Activated naive CD4-positive, alpha-beta T cell treated with anti-CD3 and anti-CD28 coated beads, Interleukin-2, amount 10 ng/mL, durations not matched to agents 7 days and 5 days (primary cell): ENCODE measurements at regions of chr3 and their contacts with region 1.

Region 1: GRCh38 chr3:58630076-58630709 is 36.4 kb downstream of the FAM3D start:
- DNase-seq: peak; percentile 72
- H3K4me3 Mint-ChIP-seq: no peak overlapping the region
- H3K27ac Mint-ChIP-seq: no peak overlapping the region
- H3K4me1 Mint-ChIP-seq: peaks cover 2% of the 10 kb centered on the region
- H3K27me3 Mint-ChIP-seq: peaks cover 14% of the 10 kb centered on the region

Region 2: DNA sequence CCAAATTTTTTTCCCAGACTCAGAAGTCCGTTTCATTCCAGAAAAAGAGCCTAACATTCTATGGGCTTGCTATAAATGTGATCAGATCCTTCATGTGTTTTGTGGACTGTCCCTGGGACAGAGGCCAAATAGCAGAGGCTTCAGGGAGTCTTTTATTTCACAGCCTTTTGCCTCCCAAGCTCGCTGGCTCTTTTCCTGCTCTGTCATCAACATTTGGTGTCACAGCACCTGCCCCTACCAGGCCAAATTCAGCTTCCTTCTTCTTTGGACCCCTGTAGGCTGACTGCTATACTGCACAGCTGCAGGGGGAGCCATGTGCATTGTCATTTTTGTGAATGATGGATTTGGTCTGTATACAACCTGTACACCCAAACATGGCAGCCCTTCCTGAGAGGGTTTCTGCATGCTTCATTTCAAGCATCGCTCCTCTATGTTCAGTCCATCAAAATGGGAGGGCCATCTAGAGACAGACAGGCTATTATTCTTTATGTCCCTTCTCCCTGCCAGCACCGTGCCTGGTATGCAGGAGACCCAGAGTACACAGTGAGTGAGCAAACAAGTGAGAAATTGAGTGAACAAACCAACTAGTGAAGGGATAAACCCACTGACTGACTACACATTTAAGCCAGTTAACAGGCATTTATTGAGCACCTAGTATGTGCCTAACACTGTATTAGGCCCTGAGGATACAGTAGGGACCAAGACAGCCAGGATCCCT is 342.0 kb before region 1 on chr3:
- CTCF ChIA-PET with region 1: no interaction called
- DNase-seq: peak; percentile 19
- H3K4me3 Mint-ChIP-seq: no peak overlapping the region
- H3K27ac Mint-ChIP-seq: no peak overlapping the region
- H3K4me1 Mint-ChIP-seq: no peaks in the 10 kb centered on the region
- H3K27me3 Mint-ChIP-seq: no peaks in the 10 kb centered on the region

Region 3: GRCh38 chr3:58568572-58569286 is 61.5 kb before region 1 on chr3:
- CTCF ChIA-PET with region 1: interaction called, 127 read pairs
- DNase-seq: peak; percentile 81
- H3K4me3 Mint-ChIP-seq: no peak overlapping the region
- H3K27ac Mint-ChIP-seq: no peak overlapping the region
- H3K4me1 Mint-ChIP-seq: no peaks in the 10 kb centered on the region
- H3K27me3 Mint-ChIP-seq: peaks cover 12% of the 10 kb centered on the region

Region 4: DNA sequence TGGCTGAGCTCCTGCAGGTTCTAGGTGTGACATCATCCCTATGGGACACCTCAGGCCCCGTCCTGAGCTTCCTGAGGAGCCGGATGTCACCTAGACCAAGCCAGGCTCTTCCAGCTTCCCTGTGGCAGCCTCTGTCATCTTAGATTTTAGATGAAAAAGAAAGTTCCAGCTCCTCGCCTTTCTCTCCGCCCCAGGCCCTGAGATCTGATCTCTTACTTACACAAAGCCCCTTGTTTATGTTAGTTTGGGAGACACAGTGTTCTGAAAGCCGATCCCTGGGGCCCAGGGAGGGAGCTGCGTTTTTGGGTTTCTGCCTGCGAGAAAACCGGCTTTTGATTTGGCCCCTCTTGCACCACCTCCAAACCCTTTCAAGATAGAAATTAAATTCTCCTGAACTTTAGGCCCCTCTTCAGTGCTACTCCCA is 12.8 kb before region 1 on chr3:
- CTCF ChIA-PET with region 1: interaction called, 43 read pairs
- DNase-seq: no peak
- H3K4me3 Mint-ChIP-seq: no peak overlapping the region
- H3K27ac Mint-ChIP-seq: no peak overlapping the region
- H3K4me1 Mint-ChIP-seq: no peaks in the 10 kb centered on the region
- H3K27me3 Mint-ChIP-seq: peaks cover 20% of the 10 kb centered on the region

Region 5: DNA sequence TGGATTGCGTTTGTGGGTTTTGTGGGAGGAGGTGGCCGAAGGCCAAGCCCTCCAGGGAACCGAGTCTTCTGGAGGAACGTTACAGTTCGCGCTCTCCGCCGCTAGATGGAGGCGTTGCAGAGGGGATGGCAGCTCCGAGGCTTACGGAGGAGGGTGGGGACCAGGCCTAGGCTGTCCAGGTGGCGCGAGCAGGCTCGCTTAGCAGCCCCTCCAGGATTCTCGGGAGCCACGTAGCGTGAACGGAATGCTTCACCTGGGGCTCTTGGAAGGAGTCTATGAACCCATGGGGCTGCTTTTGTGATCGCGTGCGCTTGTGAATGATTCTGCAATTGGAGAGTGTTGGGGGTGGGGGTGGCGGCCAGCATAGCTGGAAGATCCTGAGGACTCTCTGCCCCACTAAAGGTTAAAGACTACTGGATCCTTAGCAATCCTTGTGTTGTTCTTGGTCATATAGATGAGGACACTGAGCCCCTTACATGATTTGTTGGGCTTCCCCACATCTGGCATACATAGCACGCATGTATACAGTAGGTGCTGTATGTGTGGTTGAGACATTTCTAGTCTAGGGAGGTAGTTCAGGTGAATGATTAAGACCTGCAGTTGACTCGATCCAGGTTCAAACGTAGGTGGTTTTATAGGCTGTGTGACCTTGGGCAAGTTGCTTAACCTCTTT is 10.6 kb after region 1 on chr3:
- CTCF ChIA-PET with region 1: interaction called, 42 read pairs
- DNase-seq: peak; percentile 67
- H3K4me3 Mint-ChIP-seq: no peak overlapping the region
- H3K27ac Mint-ChIP-seq: no peak overlapping the region
- H3K4me1 Mint-ChIP-seq: no peaks in the 10 kb centered on the region
- H3K27me3 Mint-ChIP-seq: peaks cover 11% of the 10 kb centered on the region

Region 6: GRCh38 chr3:58888087-58888486 is 257.9 kb after region 1 on chr3:
- CTCF ChIA-PET with region 1: no interaction called
- DNase-seq: no peak
- H3K4me3 Mint-ChIP-seq: no peak overlapping the region
- H3K27ac Mint-ChIP-seq: no peak overlapping the region
- H3K4me1 Mint-ChIP-seq: no peaks in the 10 kb centered on the region
- H3K27me3 Mint-ChIP-seq: no peaks in the 10 kb centered on the region